Gastrocnemius medialis (tissue), 4 donors: ENCODE measurements at regions of chr19 and their contacts with region 1.

Region 1: GRCh38 chr19:48255376-48256303 is at the start of gene CARD8:
- DNase-seq: peak; percentile 69 to 74
- ATAC-seq: peak; percentile 92 to 96
- H3K4me3 ChIP-seq: peak within 1 kb of the TSS; percentile 65 to 90 (median 76)
- H3K27ac ChIP-seq: peak within 1 kb of the TSS; percentile 88 to 96 (median 93)
- H3K4me1 ChIP-seq: peaks cover 15 to 29% of the 10 kb centered on the region in 2 donors
- H3K27me3 ChIP-seq: no peaks in the 10 kb centered on the region
- CTCF ChIP-seq: peak in 1 of 5 experiments; percentile 13
- POLR2A ChIP-seq: peak in 1 of 2 donors; percentile 63
- total RNA-seq, gene CARD8: 15.7 to 23.3 (median 20.2) TPM

Region 2: DNA sequence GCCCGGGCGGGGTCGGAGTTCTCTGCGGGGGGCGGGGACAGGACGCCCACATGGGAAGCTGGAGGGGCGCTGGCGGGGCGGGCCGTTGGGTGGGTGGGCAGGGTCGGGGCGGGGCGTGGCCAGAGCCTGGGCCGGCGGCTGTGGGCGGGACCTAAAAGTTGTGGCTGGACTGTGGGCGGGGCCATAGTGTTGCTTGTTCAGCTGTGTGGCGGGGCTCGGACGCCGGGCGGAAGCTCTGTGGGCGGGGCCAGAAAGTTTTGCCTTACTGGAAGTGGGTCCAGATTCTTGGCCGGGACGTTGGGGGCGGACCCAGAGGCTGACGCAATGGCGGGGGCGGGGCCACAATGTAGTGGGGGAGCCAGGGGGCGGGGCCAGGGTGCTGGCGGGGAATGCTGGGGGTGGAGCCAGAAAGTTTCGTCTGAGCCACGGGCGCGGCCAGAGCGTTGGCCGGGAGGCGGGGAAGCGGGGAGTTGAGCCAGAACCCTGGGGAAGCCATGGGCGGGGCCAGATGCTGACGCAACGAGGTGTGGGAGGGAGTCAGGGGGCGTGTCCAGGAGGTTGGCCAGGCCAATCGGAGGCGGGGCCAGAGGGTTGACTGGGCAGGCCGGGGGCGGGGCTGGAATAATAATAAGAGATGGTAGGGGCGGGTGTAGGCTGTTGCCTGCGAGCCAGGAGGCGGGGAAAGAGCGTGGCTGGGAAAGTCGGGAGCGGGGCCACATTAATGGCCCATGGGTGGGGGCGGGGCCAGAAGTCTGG is 998.8 kb before region 1 on chr19:
- in situ Hi-C with region 1: no loop called
- intact Hi-C with region 1: loop called (anchors 5 kb)
- DNase-seq: peak; percentile 100
- ATAC-seq: peak; percentile 78 to 84
- H3K4me3 ChIP-seq: peak overlapping the region; percentile 50 to 72 (median 70)
- H3K27ac ChIP-seq: peak overlapping the region; percentile 82 to 95 (median 91)
- H3K4me1 ChIP-seq: peaks cover 16% of the 10 kb centered on the region in 2 donors
- H3K27me3 ChIP-seq: no peaks in the 10 kb centered on the region
- CTCF ChIP-seq: no peak
- POLR2A ChIP-seq: no peak

Region 3: DNA sequence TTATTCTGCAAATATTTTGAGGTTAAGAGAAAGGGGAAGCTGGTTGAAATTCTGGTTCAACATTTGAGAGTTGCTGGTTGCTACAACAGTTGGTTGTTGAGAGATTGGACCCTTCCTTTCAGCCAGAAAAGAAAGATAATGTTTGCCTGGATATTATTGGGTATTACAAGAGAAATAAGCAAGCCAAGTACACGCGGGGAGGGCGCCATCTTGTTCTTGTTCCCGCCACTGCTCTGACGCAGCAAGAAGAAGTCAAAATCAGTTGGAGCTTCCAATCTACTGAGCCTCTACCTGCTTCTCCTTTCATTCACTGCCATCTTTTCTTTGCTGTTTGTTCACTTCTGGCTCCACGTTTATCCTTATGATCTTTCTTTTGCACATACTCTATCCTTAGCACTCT is 282.1 kb before region 1 on chr19:
- in situ Hi-C with region 1: loop called in 2 of 4 experiments (anchors 25 kb)
- intact Hi-C with region 1: no loop called
- DNase-seq: no peak
- ATAC-seq: no peak
- H3K4me3 ChIP-seq: no peak overlapping the region
- H3K27ac ChIP-seq: no peak overlapping the region
- H3K4me1 ChIP-seq: no peaks in the 10 kb centered on the region
- H3K27me3 ChIP-seq: peaks cover 0 to 4% (median 2%) of the 10 kb centered on the region in 3 donors
- CTCF ChIP-seq: no peak
- POLR2A ChIP-seq: no peak

Region 4: DNA sequence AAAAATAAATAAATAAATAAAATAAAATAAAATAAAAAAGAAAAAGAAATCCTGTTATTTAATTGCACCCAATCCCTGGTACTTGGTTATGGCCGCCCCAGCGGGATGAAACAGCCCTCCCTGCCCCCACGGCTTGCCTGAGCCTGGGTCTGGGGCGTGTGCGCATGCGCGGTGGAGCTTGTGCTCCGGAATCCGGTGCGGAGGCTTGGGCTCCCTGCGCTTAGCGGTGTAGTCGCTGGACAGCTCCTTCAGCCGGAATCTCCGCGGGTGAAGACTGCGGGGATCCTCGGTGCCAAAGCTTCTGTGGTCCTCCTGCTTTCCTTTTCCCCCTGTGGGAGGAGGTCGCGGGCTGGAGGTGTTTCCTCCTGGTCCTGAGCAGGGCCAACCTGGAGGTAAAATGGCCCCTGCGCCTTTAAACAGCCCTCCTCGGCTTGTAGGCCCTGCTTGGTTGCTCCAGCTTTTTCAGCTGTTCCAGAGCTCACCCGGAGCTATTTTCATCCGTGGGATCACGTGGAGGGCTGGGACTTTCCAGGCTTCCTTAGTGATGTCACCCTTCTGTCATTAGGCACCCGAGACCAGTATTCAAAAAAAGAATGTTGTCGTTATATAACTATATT is 145.2 kb before region 1 on chr19 and contains the start of gene PLA2G4C:
- in situ Hi-C with region 1: no loop called
- intact Hi-C with region 1: loop called (anchors 5 kb)
- DNase-seq: peak; percentile 84 to 96
- ATAC-seq: peak; percentile 93 to 97
- H3K4me3 ChIP-seq: peak within 1 kb of the TSS; percentile 55 to 66 (median 63)
- H3K27ac ChIP-seq: peak within 1 kb of the TSS; percentile 90 to 99 (median 96)
- H3K4me1 ChIP-seq: peaks cover 25 to 34% of the 10 kb centered on the region in 2 donors
- H3K27me3 ChIP-seq: no peaks in the 10 kb centered on the region
- CTCF ChIP-seq: no peak
- POLR2A ChIP-seq: peak; percentile 92
- total RNA-seq, gene PLA2G4C: 25.7 to 61.1 (median 51.1) TPM

Region 5: GRCh38 chr19:48170038-48170812 is 85.4 kb before region 1 on chr19 and contains the starts of genes LIG1 and ZSWIM9:
- in situ Hi-C with region 1: no loop called
- intact Hi-C with region 1: loop called (anchors 1 kb)
- DNase-seq: peak; percentile 75 to 78
- ATAC-seq: peak; percentile 96 to 97
- H3K4me3 ChIP-seq: peak within 1 kb of the TSS; percentile 90 to 95 (median 93)
- H3K27ac ChIP-seq: peak within 1 kb of the TSS; percentile 95 to 99 (median 98)
- H3K4me1 ChIP-seq: peaks cover 6 to 15% of the 10 kb centered on the region in 2 donors
- H3K27me3 ChIP-seq: no peaks in the 10 kb centered on the region
- CTCF ChIP-seq: peak in 2 of 5 experiments; percentile 32 to 35
- POLR2A ChIP-seq: no peak
- total RNA-seq, gene LIG1: 3.7 to 9.2 (median 7.1) TPM
- total RNA-seq, gene ZSWIM9: 1.6 to 8.4 (median 2.8) TPM

Region 6: GRCh38 chr19:48203732-48204628 is 51.7 kb before region 1 on chr19:
- in situ Hi-C with region 1: no loop called
- intact Hi-C with region 1: loop called (anchors 5 kb)
- DNase-seq: peak; percentile 84 to 90
- ATAC-seq: peak; percentile 98 to 99
- H3K4me3 ChIP-seq: peak overlapping the region; percentile 55 to 88 (median 79)
- H3K27ac ChIP-seq: peak overlapping the region; percentile 69 to 85 (median 72)
- H3K4me1 ChIP-seq: peaks cover 10 to 12% of the 10 kb centered on the region in 2 donors
- H3K27me3 ChIP-seq: no peaks in the 10 kb centered on the region
- CTCF ChIP-seq: no peak
- POLR2A ChIP-seq: peak; percentile 27 to 44

Region 7: DNA sequence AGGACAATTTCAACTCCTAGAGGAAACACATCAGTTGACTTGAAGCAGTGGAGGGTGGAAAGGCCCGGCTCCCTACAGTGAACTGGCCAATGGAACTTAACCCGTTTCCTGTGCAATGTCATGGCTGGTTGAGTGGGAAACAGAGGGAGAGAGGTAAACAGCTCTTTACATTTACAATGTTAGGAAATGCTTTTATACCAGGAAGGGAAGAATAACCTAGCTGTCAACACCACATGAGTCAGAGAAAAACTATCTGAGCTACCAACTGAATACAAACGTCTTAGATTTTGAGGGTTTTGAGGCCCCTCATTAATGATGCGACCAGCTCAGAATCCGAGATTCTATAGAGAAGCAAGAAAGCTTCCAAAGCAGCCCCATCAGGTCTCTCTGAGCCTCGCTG is 36.6 kb before region 1 on chr19:
- in situ Hi-C with region 1: no loop called
- intact Hi-C with region 1: no loop called
- DNase-seq: no peak
- ATAC-seq: no peak
- H3K4me3 ChIP-seq: no peak overlapping the region
- H3K27ac ChIP-seq: no peak overlapping the region
- H3K4me1 ChIP-seq: no peaks in the 10 kb centered on the region
- H3K27me3 ChIP-seq: no peaks in the 10 kb centered on the region
- CTCF ChIP-seq: no peak
- POLR2A ChIP-seq: no peak

Region 8: DNA sequence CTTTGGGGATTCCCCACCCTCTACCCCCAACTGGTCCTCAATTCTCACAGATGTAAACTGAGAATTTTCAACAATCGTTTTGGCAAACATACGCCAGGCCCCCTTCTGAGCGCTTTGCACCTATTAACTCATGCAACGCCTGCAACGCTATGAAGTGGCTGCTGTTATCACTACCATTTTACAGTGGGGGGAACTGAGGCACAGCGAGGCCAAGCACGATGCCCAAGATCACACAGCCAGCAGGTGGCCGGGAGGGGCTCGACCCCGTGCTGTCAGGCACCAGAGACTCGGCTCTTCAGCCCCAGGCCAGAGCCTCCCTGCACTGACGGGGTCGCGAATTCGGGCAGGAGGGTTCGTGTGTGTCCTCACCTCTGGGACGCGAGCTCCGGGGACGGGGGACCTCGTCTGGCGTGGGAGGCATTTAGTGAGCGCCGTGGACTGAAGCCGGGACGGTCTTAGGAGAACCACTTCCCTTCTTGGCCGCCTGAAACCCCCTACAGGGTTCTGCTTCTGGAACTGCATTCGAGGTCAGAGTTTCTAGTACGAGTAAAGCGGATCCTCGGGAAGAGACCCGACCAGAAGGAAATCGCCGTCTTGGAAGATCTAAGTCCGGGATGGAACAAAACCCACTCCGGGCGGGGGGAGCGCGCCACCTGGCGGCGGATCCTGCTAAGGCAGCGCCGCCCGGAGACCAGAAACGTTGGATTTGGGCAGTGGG is 35.3 kb after region 1 on chr19:
- in situ Hi-C with region 1: no loop called
- intact Hi-C with region 1: no loop called
- DNase-seq: peak; percentile 38 to 51
- ATAC-seq: peak; percentile 92 to 95
- H3K4me3 ChIP-seq: peak overlapping the region; percentile 34 to 49 (median 46)
- H3K27ac ChIP-seq: no peak overlapping the region
- H3K4me1 ChIP-seq: peaks cover 3 to 4% of the 10 kb centered on the region in 2 donors
- H3K27me3 ChIP-seq: peaks cover 3 to 8% (median 4%) of the 10 kb centered on the region in 3 donors
- CTCF ChIP-seq: peak; percentile 88 to 99 (median 93)
- POLR2A ChIP-seq: no peak

Region 9: GRCh38 chr19:48308631-48309586 is 53.3 kb after region 1 on chr19:
- in situ Hi-C with region 1: no loop called
- intact Hi-C with region 1: no loop called
- DNase-seq: no peak
- ATAC-seq: no peak
- H3K4me3 ChIP-seq: no peak overlapping the region
- H3K27ac ChIP-seq: peak overlapping the region; percentile 51 to 67 (median 64)
- H3K4me1 ChIP-seq: peaks cover 10 to 13% of the 10 kb centered on the region in 2 donors
- H3K27me3 ChIP-seq: no peaks in the 10 kb centered on the region
- CTCF ChIP-seq: no peak
- POLR2A ChIP-seq: no peak

Region 10: DNA sequence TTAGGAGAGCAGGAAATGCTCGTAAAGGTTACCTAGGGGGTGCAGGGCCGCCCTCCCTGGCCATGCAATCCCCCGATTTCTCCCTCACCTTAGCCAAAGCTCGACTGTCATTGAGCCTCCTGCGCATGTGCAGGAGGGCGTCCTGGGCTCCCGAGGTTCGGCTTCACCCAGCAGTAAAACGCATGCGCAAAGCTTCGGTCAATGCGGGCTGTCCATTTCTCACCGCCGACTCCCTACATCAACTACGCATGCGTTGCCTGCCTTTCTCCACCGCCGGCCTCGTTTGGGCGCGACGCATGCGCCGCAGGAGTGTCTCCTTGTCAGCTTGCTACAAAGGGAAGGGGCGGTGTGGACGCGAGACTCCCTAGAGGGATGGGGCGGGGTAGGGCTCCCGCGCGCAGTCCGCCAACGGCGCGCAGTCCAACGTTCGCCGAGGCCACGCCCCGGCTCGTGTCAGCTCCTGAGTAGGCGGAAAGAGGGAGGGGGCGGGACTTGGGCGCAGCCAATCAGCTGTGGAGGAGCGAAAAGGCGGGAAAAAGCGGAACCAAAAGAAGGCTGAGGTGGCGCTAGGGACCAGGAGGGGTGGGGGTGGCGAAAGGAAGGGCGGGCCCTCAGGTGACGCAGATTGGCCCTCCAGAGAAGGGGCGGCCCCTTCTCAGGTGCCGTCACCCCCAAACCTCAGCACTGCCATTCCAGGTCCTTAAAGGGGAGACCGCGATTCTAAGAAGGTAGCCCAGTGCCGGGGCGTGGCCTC is 108.3 kb after region 1 on chr19 and contains the starts of genes SYNGR4 and TMEM143:
- in situ Hi-C with region 1: no loop called
- intact Hi-C with region 1: loop called (anchors 5 kb)
- DNase-seq: peak; percentile 98 to 99
- ATAC-seq: peak; percentile 94 to 97
- H3K4me3 ChIP-seq: peak within 1 kb of the TSS; percentile 75 to 99 (median 84)
- H3K27ac ChIP-seq: peak within 1 kb of the TSS; percentile 97 to 100 (median 99)
- H3K4me1 ChIP-seq: peaks cover 4 to 10% of the 10 kb centered on the region in 2 donors
- H3K27me3 ChIP-seq: no peaks in the 10 kb centered on the region
- CTCF ChIP-seq: no peak
- POLR2A ChIP-seq: peak in 1 of 2 donors; percentile 35
- total RNA-seq, gene SYNGR4: not detected
- total RNA-seq, gene TMEM143: 28.8 to 42.3 (median 40.7) TPM

Region 11: DNA sequence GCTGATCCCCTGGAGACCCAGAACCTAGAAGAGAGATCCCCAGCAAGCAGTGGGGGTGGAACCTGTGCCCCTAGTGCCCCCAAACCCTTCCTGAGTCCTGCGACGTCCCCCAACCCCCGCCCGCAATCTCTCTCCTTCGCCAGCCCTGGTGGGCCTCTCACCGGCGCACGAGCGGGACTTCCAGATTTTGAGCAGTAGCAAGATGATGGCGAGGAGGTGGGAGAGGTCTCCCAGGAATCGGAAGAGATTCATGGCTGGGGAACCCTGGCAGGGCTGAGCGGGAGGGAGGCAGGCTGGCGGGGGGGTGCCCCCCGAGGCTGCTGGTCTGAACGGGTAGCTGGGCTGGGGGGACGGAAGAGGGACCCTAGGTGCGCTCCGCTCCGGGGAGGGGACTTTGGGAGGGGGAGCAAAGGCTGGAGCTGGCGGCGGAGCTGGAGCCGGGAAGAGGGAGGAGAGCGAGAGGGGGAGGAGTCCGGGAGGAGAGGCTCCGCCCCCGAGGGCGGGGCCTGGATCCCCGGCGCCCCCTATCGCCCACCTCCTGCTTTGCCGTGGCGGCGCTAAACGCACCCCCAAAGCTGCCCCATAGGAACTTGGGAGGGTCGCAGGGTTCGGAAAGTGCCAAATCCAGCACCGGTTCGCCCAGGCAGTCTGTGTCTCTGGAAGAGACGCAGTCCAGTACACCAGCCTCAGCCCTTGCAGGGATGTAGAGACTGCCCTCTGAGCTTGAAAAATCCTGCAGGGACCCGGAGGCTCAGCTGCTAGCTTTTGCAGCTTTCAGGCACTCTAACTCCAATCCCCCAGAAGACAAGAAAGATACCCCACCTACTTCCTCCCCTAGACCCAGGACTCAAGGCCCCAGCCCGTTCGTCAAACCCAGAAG is 135.7 kb after region 1 on chr19 and contains the start of gene KDELR1:
- in situ Hi-C with region 1: no loop called
- intact Hi-C with region 1: no loop called
- DNase-seq: peak; percentile 58 to 66
- ATAC-seq: peak; percentile 91 to 92
- H3K4me3 ChIP-seq: peak within 1 kb of the TSS; percentile 83 to 100 (median 92)
- H3K27ac ChIP-seq: peak within 1 kb of the TSS; percentile 85 to 91 (median 88)
- H3K4me1 ChIP-seq: peaks cover 4 to 19% of the 10 kb centered on the region in 2 donors
- H3K27me3 ChIP-seq: peaks cover 36 to 41% (median 41%) of the 10 kb centered on the region in 3 donors
- CTCF ChIP-seq: peak; percentile 78 to 96 (median 87)
- POLR2A ChIP-seq: peak; percentile 60 to 68
- total RNA-seq, gene KDELR1: 44.9 to 64.7 (median 54.0) TPM